Heart left ventricle (tissue), 16 donors: ENCODE measurements at regions of chr11 and their contacts with region 1.

Region 1: GRCh38 chr11:57800444-57801182 is 39.0 kb downstream of the CTNND1 start:
- DNase-seq: no peak
- ATAC-seq: peak; percentile 40 to 74 (median 64)
- H3K4me3 ChIP-seq: no peak overlapping the region
- H3K27ac ChIP-seq: peak overlapping the region in 11 of 12 donors; percentile 45 to 81 (median 69)
- H3K4me1 ChIP-seq: peaks cover 11 to 70% (median 44%) of the 10 kb centered on the region in 12 donors
- H3K27me3 ChIP-seq: no peaks in the 10 kb centered on the region
- CTCF ChIP-seq: peak; percentile 81 to 94 (median 88)
- POLR2A ChIP-seq: no peak

Region 2: DNA sequence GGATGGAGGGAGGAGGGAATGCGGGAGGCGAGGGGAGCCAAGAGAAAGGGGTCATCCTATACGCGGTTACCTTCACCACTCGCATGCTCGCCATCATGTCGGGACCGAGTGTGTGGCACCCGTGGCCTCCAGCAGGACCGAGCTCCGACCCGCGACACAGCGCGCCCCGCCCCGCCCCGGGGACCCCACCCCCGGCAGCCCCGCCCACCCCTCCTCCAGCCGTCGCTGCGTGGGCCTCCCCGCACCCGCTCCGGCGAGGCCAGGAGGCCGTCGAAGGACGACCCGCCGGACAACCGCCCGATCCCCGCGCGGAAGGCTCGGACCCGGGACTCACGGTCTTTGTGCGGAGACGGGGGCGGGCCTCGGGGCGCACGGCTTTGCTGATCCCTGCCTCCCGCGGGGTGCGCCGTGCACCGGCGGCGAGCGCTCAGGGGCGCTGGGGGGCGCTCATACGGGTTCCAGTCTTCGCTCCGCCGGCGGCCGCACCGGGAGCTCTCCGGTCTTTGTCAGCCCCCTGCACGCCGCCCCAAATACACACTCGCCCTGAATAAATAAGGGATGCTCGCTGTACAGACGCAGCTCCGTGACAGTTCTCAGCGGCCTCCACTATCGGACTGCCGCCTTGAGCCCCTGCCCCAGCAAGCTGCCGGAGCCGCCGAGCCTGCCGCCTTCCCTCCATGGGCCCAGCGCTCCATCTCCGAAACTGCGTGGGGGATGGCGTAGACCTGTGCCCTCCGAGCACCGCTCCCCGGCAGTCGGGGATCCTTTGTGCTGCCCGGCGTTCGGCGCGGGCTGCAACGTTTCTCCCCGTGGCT is 232.9 kb before region 1 on chr11 and contains the start of gene UBE2L6:
- intact Hi-C with region 1: loop called in 1 of 10 experiments (anchors 10 kb)
- DNase-seq: peak; percentile 56 to 90 (median 85)
- ATAC-seq: peak in 3 of 4 donors; percentile 80 to 87 (median 85)
- H3K4me3 ChIP-seq: peak within 1 kb of the TSS; percentile 57 to 96 (median 78)
- H3K27ac ChIP-seq: peak within 1 kb of the TSS; percentile 61 to 94 (median 84)
- H3K4me1 ChIP-seq: peaks cover 0 to 65% (median 14%) of the 10 kb centered on the region in 12 donors
- H3K27me3 ChIP-seq: no peaks in the 10 kb centered on the region
- CTCF ChIP-seq: peak in 7 of 12 donors; percentile 81 to 94 (median 86)
- POLR2A ChIP-seq: no peak
- total RNA-seq, gene UBE2L6: 11.2 to 175 (median 14.5) TPM

Region 3: GRCh38 chr11:57712256-57713150 is 88.1 kb before region 1 on chr11 and contains the start of gene TMX2:
- intact Hi-C with region 1: loop called in 1 of 10 experiments (anchors 5 kb)
- DNase-seq: peak; percentile 92 to 96 (median 94)
- ATAC-seq: peak; percentile 97 to 98 (median 97)
- H3K4me3 ChIP-seq: peak within 1 kb of the TSS; percentile 68 to 100 (median 90)
- H3K27ac ChIP-seq: peak within 1 kb of the TSS; percentile 73 to 95 (median 91)
- H3K4me1 ChIP-seq: peaks cover 0 to 47% (median 31%) of the 10 kb centered on the region in 12 donors
- H3K27me3 ChIP-seq: no peaks in the 10 kb centered on the region
- CTCF ChIP-seq: no peak
- POLR2A ChIP-seq: no peak
- total RNA-seq, gene TMX2: 46.7 to 78.2 (median 65.8) TPM

Region 4: DNA sequence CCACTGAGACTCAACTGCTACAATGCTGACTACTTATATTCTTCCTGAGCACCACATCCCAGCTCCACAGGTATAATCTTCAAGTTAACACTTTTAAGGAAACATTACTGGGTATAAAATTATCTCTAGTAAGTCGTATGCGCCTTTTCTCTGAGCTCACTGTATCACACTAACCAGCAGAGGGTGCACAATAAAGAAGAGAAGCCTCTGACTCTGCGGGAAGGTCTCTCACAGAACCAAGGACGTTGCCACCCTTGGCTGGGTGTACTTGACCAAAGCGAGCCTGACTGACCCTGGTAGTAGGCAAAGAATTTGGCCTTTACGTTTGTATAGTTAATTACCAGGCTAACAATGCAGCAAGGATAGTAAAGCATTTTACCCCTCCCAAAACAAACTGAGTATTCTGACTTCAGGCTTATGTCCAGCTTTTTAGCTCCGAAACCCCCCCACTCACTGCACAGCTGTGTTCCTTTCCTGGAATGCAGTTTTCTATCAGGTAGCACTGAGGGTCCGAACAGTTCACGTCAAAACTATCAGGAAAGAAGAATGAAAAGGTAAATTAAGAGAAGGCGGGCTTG is 48.8 kb before region 1 on chr11 and contains the start of gene BTBD18:
- intact Hi-C with region 1: loop called in 3 of 10 experiments (anchors 2 to 5 kb)
- DNase-seq: peak in 4 of 5 donors; percentile 36 to 45 (median 38)
- ATAC-seq: peak; percentile 76 to 89 (median 85)
- H3K4me3 ChIP-seq: no peak within 1 kb of the TSS
- H3K27ac ChIP-seq: peak within 1 kb of the TSS in 6 of 12 donors; percentile 17 to 56 (median 42)
- H3K4me1 ChIP-seq: peaks cover 0 to 9% (median 5%) of the 10 kb centered on the region in 12 donors
- H3K27me3 ChIP-seq: no peaks in the 10 kb centered on the region
- CTCF ChIP-seq: peak; percentile 39 to 64 (median 55)
- POLR2A ChIP-seq: no peak
- total RNA-seq, gene BTBD18: not detected

Region 5: GRCh38 chr11:58286249-58286648 is 485.6 kb after region 1 on chr11:
- intact Hi-C with region 1: loop called in 1 of 10 experiments (anchors 10 kb)
- DNase-seq: no peak
- ATAC-seq: peak in 3 of 4 donors; percentile 50 to 59 (median 58)
- H3K4me3 ChIP-seq: no peak overlapping the region
- H3K27ac ChIP-seq: peak overlapping the region in 1 of 12 donors; percentile 7
- H3K4me1 ChIP-seq: peaks cover 0 to 5% (median 0%) of the 10 kb centered on the region in 12 donors
- H3K27me3 ChIP-seq: no peaks in the 10 kb centered on the region
- CTCF ChIP-seq: peak; percentile 28 to 65 (median 52)
- POLR2A ChIP-seq: no peak